Calu3 (cell line): ENCODE measurements at regions of chr6 and their contacts with region 1.

Region 1: DNA sequence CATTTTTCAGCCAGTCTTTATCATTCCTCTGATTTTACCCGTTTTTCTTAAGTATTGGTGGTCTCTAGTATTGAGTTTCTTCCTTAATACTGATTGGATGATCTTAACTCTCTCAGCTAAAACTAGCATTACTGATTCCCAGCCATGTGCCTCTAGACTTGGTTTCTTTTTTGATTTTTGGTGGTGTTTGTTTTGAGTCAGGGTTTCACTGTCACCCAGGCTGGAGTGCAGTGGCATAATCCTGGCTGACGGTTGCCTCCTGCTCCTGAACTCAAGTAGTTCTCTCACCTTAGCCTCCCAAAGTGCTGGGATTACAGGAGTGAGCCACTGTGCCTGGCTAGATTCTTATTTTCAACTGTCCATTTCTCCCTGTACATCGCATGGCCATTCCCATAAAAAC is 24.9 kb downstream of the DPPA5 start:
- DNase-seq: no peak
- H3K4me3 Mint-ChIP-seq: no peak overlapping the region
- H3K27ac Mint-ChIP-seq: no peak overlapping the region
- H3K4me1 Mint-ChIP-seq: no peaks in the 10 kb centered on the region
- H3K27me3 Mint-ChIP-seq: peaks cover 37% of the 10 kb centered on the region
- CTCF ChIP-seq: no peak

Region 2: GRCh38 chr6:73180763-73181619 is 148.2 kb before region 1 on chr6:
- CTCF ChIA-PET with region 1: no interaction called
- intact Hi-C with region 1: loop called (anchors 5 kb)
- DNase-seq: peak; percentile 26
- H3K4me3 Mint-ChIP-seq: peak overlapping the region; percentile 41
- H3K27ac Mint-ChIP-seq: no peak overlapping the region
- H3K4me1 Mint-ChIP-seq: no peaks in the 10 kb centered on the region
- H3K27me3 Mint-ChIP-seq: peaks cover 26% of the 10 kb centered on the region
- CTCF ChIP-seq: peak; percentile 58

Region 3: GRCh38 chr6:73314577-73315492 is 14.4 kb before region 1 on chr6:
- CTCF ChIA-PET with region 1: no interaction called
- intact Hi-C with region 1: no loop called
- DNase-seq: no peak
- H3K4me3 Mint-ChIP-seq: no peak overlapping the region
- H3K27ac Mint-ChIP-seq: no peak overlapping the region
- H3K4me1 Mint-ChIP-seq: peaks cover 13% of the 10 kb centered on the region
- H3K27me3 Mint-ChIP-seq: no peaks in the 10 kb centered on the region
- CTCF ChIP-seq: no peak